PC-3 (cell line): ENCODE measurements at regions of chr12 and their contacts with region 1.

Region 1: GRCh38 chr12:1167784-1168183 is 176.8 kb downstream of the ERC1 start:
- DNase-seq: no peak
- ATAC-seq: no peak
- H3K4me3 ChIP-seq: no peak overlapping the region
- H3K27ac ChIP-seq: no peak overlapping the region
- H3K4me1 ChIP-seq: peaks cover 6% of the 10 kb centered on the region; the same call in 1 of the 2 replicates
- H3K27me3 ChIP-seq: no peaks in the 10 kb centered on the region
- CTCF ChIP-seq: no peak

Region 2: GRCh38 chr12:1059162-1059561 is 108.6 kb before region 1 on chr12:
- CTCF ChIA-PET with region 1: no interaction called
- POLR2A ChIA-PET with region 1: no interaction called
- intact Hi-C with region 1: no loop called
- DNase-seq: no peak
- ATAC-seq: no peak
- H3K4me3 ChIP-seq: no peak overlapping the region
- H3K27ac ChIP-seq: no peak overlapping the region
- H3K4me1 ChIP-seq: no peaks in the 10 kb centered on the region
- H3K27me3 ChIP-seq: no peaks in the 10 kb centered on the region
- CTCF ChIP-seq: no peak

Region 3: GRCh38 chr12:1147821-1148220 is 20.0 kb before region 1 on chr12:
- CTCF ChIA-PET with region 1: no interaction called
- POLR2A ChIA-PET with region 1: interaction called, 10 read pairs
- intact Hi-C with region 1: no loop called
- DNase-seq: no peak
- ATAC-seq: no peak
- H3K4me3 ChIP-seq: no peak overlapping the region
- H3K27ac ChIP-seq: no peak overlapping the region
- H3K4me1 ChIP-seq: no peaks in the 10 kb centered on the region
- H3K27me3 ChIP-seq: no peaks in the 10 kb centered on the region
- CTCF ChIP-seq: no peak